WTC11 (cell line): ENCODE measurements at regions of chr13 and their contacts with region 1.

Region 1: DNA sequence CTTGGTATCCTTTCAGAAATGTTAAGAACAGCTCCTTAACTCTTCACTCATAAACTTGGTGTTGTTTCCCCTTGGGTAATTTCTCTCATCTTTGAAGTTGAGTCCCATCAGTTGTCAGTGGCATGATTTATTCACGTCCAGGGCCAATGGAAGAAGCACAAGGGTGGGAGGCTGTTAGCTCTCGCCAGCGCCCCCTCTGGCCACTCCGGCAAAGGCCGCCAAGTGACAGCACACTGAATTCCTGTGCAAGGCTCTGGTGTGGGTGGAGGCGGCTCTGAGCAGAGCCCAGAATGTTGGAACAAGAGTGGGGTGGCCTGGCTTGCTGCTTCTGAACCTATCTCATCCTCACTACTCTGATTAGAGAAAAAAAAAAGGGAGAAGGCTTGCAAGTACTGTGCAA is 13.1 kb upstream of the MEDAG start:
- DNase-seq: peak; percentile 89
- ATAC-seq: peak; percentile 100
- H3K4me3 Mint-ChIP-seq: no peak overlapping the region
- H3K27ac Mint-ChIP-seq: no peak overlapping the region
- H3K4me1 Mint-ChIP-seq: peaks cover 3% of the 10 kb centered on the region
- H3K27me3 Mint-ChIP-seq: no peaks in the 10 kb centered on the region
- CTCF ChIP-seq: peak; percentile 78

Region 2: GRCh38 chr13:30872685-30873461 is 20.1 kb before region 1 on chr13:
- CTCF ChIA-PET with region 1: interaction called, 15 read pairs
- POLR2A ChIA-PET with region 1: no interaction called
- DNase-seq: peak; percentile 51
- ATAC-seq: peak; percentile 37
- H3K4me3 Mint-ChIP-seq: peak overlapping the region; percentile 16; the same call in 1 of the 2 replicates
- H3K27ac Mint-ChIP-seq: peak overlapping the region; percentile 68; the same call in 1 of the 2 replicates
- H3K4me1 Mint-ChIP-seq: peaks cover 54% of the 10 kb centered on the region
- H3K27me3 Mint-ChIP-seq: no peaks in the 10 kb centered on the region
- CTCF ChIP-seq: no peak

Region 3: GRCh38 chr13:30880856-30881155 is 12.2 kb before region 1 on chr13:
- CTCF ChIA-PET with region 1: interaction called, 18 read pairs
- POLR2A ChIA-PET with region 1: no interaction called
- DNase-seq: no peak
- ATAC-seq: no peak
- H3K4me3 Mint-ChIP-seq: no peak overlapping the region
- H3K27ac Mint-ChIP-seq: no peak overlapping the region
- H3K4me1 Mint-ChIP-seq: peaks cover 16% of the 10 kb centered on the region
- H3K27me3 Mint-ChIP-seq: no peaks in the 10 kb centered on the region; the same call in 1 of the 2 replicates
- CTCF ChIP-seq: no peak

Region 4: DNA sequence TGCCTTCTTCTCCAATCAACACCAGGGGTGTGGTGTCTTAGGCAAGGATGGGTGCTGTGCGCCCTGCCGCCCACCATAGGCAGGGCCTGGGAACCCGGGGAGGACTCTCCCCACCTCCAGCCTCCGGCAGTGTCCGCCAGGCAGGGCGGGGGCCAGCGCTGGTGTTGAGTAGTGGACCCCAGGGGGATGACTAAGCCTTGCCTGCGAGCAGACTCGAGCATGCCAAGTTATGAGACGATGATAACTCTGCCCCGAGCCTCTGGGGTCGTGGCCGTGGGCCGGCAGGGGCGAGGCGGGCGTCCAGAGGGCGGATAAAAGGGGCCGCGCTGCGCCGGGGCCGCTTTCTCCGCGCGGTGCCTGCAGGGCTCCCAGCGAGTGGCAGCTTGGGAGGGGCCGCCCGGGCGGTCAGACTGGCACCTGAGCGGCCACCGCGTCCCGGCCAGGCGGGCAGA is 13.0 kb after region 1 on chr13 and contains the start of gene MEDAG:
- CTCF ChIA-PET with region 1: interaction called, 10 read pairs
- POLR2A ChIA-PET with region 1: no interaction called
- DNase-seq: peak; percentile 15
- ATAC-seq: peak; percentile 56
- H3K4me3 Mint-ChIP-seq: peak within 1 kb of the TSS; percentile 68
- H3K27ac Mint-ChIP-seq: no peak within 1 kb of the TSS
- H3K4me1 Mint-ChIP-seq: peaks cover 6% of the 10 kb centered on the region
- H3K27me3 Mint-ChIP-seq: peaks cover 52% of the 10 kb centered on the region
- CTCF ChIP-seq: no peak
- total RNA-seq, gene MEDAG: 1.9 to 2.4 TPM (median 2.1 TPM) in 3 replicates

Region 5: GRCh38 chr13:31408927-31409326 is 516.0 kb after region 1 on chr13:
- CTCF ChIA-PET with region 1: no interaction called
- POLR2A ChIA-PET with region 1: no interaction called
- DNase-seq: no peak
- ATAC-seq: no peak
- H3K4me3 Mint-ChIP-seq: no peak overlapping the region
- H3K27ac Mint-ChIP-seq: no peak overlapping the region
- H3K4me1 Mint-ChIP-seq: no peaks in the 10 kb centered on the region
- H3K27me3 Mint-ChIP-seq: no peaks in the 10 kb centered on the region
- CTCF ChIP-seq: no peak

Region 6: GRCh38 chr13:31629085-31629780 is 736.3 kb after region 1 on chr13:
- CTCF ChIA-PET with region 1: no interaction called
- POLR2A ChIA-PET with region 1: no interaction called
- DNase-seq: no peak
- ATAC-seq: no peak
- H3K4me3 Mint-ChIP-seq: no peak overlapping the region
- H3K27ac Mint-ChIP-seq: no peak overlapping the region
- H3K4me1 Mint-ChIP-seq: peaks cover 23% of the 10 kb centered on the region
- H3K27me3 Mint-ChIP-seq: no peaks in the 10 kb centered on the region
- CTCF ChIP-seq: no peak